Activated B cell treated with CpG ODN at 0.5 μM for 24 hours (primary cell): ENCODE measurements at regions of chr1 and their contacts with region 1.

Region 1: GRCh38 chr1:212455803-212456528 is 23.2 kb downstream of the NENF start:
- DNase-seq: peak; percentile 76
- ATAC-seq: peak; percentile 83
- H3K4me3 Mint-ChIP-seq: no peak overlapping the region
- H3K27ac Mint-ChIP-seq: no peak overlapping the region
- H3K4me1 Mint-ChIP-seq: peaks cover 4% of the 10 kb centered on the region
- H3K27me3 Mint-ChIP-seq: no peaks in the 10 kb centered on the region
- CTCF ChIP-seq: peak; percentile 98

Region 2: GRCh38 chr1:212012034-212012740 is 443.8 kb before region 1 on chr1:
- CTCF ChIA-PET with region 1: interaction called, 11 read pairs
- POLR2A ChIA-PET with region 1: no interaction called
- intact Hi-C with region 1: loop called (anchors 1 kb)
- DNase-seq: no peak
- ATAC-seq: peak; percentile 99
- H3K4me3 Mint-ChIP-seq: no peak overlapping the region
- H3K27ac Mint-ChIP-seq: no peak overlapping the region
- H3K4me1 Mint-ChIP-seq: no peaks in the 10 kb centered on the region
- H3K27me3 Mint-ChIP-seq: no peaks in the 10 kb centered on the region
- CTCF ChIP-seq: peak; percentile 64

Region 3: GRCh38 chr1:212070720-212071302 is 385.2 kb before region 1 on chr1:
- CTCF ChIA-PET with region 1: interaction called, 236 read pairs
- POLR2A ChIA-PET with region 1: interaction called, 8 read pairs
- intact Hi-C with region 1: loop called (anchors 1 kb)
- DNase-seq: no peak
- ATAC-seq: peak; percentile 47
- H3K4me3 Mint-ChIP-seq: no peak overlapping the region
- H3K27ac Mint-ChIP-seq: no peak overlapping the region
- H3K4me1 Mint-ChIP-seq: no peaks in the 10 kb centered on the region
- H3K27me3 Mint-ChIP-seq: no peaks in the 10 kb centered on the region
- CTCF ChIP-seq: no peak

Region 4: DNA sequence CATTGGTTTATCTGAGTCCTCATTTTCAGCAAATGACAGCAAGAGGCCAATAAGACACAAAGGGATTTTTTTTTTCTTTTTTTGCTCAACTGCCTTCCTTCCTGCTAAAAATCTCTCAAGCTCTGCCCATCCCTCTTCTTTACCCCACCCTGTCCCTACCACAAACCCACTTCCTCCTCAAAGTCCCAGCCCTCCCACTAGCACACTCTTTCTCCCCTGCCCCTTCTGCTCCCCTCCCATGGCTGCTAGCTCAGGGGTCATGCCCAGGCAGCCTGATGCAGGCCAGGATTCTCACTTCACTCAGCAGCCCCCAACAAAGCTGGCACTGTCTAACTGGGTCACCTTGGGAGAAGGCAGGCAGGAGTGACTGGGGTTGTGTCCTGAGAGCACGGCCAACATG is 199.6 kb before region 1 on chr1:
- CTCF ChIA-PET with region 1: no interaction called
- POLR2A ChIA-PET with region 1: no interaction called
- intact Hi-C with region 1: no loop called
- DNase-seq: no peak
- ATAC-seq: peak; percentile 64
- H3K4me3 Mint-ChIP-seq: peak overlapping the region; percentile 55
- H3K27ac Mint-ChIP-seq: peak overlapping the region; percentile 87
- H3K4me1 Mint-ChIP-seq: peaks cover 36% of the 10 kb centered on the region
- H3K27me3 Mint-ChIP-seq: no peaks in the 10 kb centered on the region
- CTCF ChIP-seq: no peak

Region 5: DNA sequence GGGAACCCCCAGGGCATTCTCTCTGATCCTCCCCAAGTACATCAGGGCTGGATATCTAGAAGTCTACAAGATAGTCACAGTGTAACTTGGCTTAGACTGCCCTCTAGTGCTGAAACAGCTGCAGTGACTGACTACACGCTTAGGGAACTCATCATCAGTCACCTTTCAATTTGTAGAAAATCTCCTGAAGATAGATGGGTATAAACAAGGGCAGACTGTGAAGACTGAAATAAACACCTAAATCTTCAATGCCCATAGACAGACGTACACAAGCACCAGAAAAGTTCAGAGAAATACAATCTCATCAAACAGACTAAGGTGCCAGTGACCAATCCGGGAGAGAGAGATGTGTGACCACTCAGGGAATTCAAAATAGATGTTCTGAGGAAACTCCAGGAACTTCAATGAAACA is 87.9 kb before region 1 on chr1:
- CTCF ChIA-PET with region 1: interaction called, 54 read pairs
- POLR2A ChIA-PET with region 1: interaction called, 6 read pairs
- intact Hi-C with region 1: loop called (anchors 1 kb)
- DNase-seq: no peak
- ATAC-seq: peak; percentile 89
- H3K4me3 Mint-ChIP-seq: no peak overlapping the region
- H3K27ac Mint-ChIP-seq: no peak overlapping the region
- H3K4me1 Mint-ChIP-seq: no peaks in the 10 kb centered on the region
- H3K27me3 Mint-ChIP-seq: no peaks in the 10 kb centered on the region
- CTCF ChIP-seq: peak; percentile 25

Region 6: DNA sequence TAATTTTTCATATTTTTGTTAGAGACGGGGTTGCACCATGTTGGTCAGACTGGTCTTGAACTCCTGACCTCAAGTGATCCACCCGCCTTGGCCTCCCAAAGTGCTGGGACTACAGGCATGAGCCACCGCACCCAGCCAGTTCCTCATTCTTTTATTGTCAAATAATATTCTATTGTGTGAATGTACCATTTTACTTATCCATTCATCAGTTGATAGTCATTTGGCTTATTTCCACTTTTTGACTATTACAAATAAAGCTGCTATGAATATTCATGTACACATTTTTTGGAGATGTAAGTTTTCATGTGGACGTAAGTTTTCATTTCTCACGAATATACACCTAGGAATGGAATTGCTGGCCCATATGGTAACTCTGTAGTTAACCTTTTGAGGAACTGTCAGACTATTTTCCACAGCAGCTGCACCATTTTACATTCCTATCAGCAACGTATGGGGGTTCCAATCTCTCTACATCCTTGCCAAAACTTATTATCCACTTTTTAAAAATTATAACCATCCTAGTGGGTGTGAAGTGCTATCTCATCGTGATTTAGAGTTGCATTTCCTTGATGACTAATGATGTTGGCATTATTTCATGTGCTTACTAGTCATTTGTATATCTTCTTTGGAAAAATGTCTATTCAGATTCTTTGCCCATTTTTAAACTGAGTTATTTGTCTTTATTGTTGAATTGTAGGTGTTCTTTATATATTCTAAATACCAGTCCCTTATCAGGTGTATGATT is 54.0 kb before region 1 on chr1:
- CTCF ChIA-PET with region 1: no interaction called
- POLR2A ChIA-PET with region 1: no interaction called
- intact Hi-C with region 1: loop called (anchors 5 kb)
- DNase-seq: no peak
- ATAC-seq: no peak
- H3K4me3 Mint-ChIP-seq: no peak overlapping the region
- H3K27ac Mint-ChIP-seq: no peak overlapping the region
- H3K4me1 Mint-ChIP-seq: peaks cover 9% of the 10 kb centered on the region
- H3K27me3 Mint-ChIP-seq: no peaks in the 10 kb centered on the region
- CTCF ChIP-seq: no peak

Region 7: DNA sequence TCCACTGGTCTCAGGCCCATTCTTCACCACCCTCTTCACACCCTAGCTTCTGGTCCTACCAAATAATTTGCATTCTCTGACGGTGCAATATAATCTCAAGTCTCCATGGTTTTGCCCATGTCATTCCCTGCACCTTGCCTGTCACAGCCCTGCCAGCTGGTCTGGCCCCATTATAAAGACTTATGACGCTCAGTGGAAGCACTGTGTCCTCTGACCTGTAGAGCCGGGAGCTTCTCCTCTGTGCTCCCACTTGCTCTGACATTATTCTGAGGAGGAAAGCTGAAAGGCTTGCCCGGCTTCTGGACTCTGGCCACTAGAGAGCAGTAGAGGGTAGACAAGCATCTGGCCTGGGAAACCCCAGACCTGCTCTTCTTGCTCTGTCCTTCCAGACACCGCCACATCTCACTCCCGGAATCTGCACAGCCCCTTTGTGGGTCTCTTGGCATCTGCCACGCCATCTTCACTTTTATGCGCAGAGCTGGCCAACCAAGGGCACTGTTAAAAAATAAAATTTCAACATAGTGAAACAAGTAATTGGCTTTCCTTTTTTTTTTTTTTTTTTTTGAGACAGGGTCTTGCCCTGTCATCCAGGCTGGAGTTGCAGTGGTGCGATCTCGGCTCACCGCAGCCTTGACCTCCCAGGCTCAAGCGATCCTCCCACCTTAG is 21.2 kb after region 1 on chr1:
- CTCF ChIA-PET with region 1: interaction called, 21 read pairs
- POLR2A ChIA-PET with region 1: no interaction called
- intact Hi-C with region 1: no loop called
- DNase-seq: peak; percentile 52
- ATAC-seq: peak; percentile 97
- H3K4me3 Mint-ChIP-seq: no peak overlapping the region
- H3K27ac Mint-ChIP-seq: no peak overlapping the region
- H3K4me1 Mint-ChIP-seq: peaks cover 8% of the 10 kb centered on the region
- H3K27me3 Mint-ChIP-seq: peaks cover 19% of the 10 kb centered on the region
- CTCF ChIP-seq: peak; percentile 85

Region 8: DNA sequence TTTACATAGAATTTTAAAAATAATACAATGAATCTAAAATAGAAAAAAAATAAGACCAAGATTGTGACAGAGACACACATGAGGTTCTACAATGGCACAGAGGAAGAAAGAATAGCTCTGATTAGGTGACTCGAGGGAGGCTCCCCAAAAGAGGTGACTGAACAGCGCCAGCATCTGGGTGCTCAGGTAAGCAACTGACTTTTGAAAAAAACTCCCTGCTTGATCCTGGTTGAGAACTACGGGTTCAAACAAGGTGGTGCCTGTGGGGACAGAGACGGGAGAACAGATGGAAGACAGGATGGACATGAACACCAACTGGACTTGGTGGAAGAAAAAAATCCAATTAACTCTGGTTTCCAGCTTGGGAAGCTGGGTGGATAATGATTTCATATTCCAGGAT is 221.2 kb after region 1 on chr1:
- CTCF ChIA-PET with region 1: no interaction called
- POLR2A ChIA-PET with region 1: no interaction called
- intact Hi-C with region 1: no loop called
- DNase-seq: no peak
- ATAC-seq: no peak
- H3K4me3 Mint-ChIP-seq: no peak overlapping the region
- H3K27ac Mint-ChIP-seq: peak overlapping the region; percentile 35
- H3K4me1 Mint-ChIP-seq: peaks cover 31% of the 10 kb centered on the region
- H3K27me3 Mint-ChIP-seq: peaks cover 4% of the 10 kb centered on the region
- CTCF ChIP-seq: no peak

Region 9: DNA sequence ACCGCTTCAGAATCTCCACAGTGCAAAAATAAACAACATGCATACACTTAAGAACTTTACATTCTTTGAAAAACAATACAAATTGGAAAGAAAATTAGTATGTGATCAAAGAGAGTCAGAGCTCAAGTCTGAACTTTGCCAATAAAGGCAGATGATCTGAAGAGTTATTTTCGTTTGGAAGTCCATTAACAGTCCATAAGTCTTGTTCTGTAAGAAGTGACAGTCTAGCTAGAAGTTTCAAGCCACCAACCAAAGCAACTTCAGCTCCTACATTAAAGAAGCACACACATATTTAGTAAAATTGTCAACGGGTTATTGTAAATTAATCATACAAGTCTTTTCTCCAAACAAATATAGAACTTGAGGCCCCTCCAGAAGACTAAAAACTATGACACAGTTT is 539.0 kb after region 1 on chr1:
- CTCF ChIA-PET with region 1: interaction called, 33 read pairs
- POLR2A ChIA-PET with region 1: no interaction called
- intact Hi-C with region 1: loop called (anchors 1 kb)
- DNase-seq: no peak
- ATAC-seq: no peak
- H3K4me3 Mint-ChIP-seq: no peak overlapping the region
- H3K27ac Mint-ChIP-seq: no peak overlapping the region
- H3K4me1 Mint-ChIP-seq: no peaks in the 10 kb centered on the region
- H3K27me3 Mint-ChIP-seq: no peaks in the 10 kb centered on the region
- CTCF ChIP-seq: no peak